Posterior cingulate gyrus (tissue), 11 donors: ENCODE measurements at regions of chr17 and their contacts with region 1.

Region 1: GRCh38 chr17:68533887-68534694 is 21.9 kb downstream of the PRKAR1A start:
- DNase-seq: no peak

Region 2: DNA sequence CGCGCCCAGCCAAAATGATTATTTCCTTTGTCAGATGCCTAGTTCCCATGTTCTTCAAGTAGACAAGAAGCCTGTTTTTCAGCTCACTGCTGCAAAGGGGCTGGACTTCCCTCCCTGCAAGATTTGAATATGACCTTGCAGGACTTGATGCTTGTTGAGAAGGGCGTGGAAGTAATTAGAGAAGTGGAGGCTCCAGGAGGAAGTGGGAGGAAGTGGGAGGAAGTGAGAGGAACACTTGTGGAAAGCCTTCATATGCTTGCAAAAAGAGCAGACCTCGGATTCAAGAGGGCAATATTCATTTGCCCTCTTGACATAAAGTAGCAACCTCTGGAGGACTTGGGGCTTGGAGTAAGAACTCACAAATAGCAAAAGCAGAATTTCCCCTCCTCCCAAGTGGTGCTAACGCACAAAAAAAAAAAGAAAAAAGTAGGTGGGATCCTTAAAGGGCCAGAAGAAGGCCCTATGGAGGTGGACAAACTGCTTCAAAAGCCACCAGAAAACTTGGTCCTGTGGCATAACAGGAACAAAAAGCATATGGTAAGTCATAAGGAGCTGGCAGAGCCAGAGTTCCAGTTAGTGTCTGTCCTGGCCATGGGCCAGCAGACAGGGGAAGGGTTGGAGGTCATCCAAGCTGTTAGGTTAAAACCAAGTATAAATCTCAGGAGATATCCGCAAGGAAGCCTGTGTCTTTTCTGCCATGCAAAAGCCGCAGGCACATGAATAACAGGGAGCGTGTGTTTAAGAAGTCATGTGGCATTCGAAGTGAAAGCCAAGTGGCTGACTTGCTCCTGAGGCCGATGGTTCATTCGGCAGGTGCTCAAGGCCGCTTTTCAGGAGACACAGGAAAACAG is 42.5 kb before region 1 on chr17:
- intact Hi-C with region 1: no loop called
- DNase-seq: no peak

Region 3: DNA sequence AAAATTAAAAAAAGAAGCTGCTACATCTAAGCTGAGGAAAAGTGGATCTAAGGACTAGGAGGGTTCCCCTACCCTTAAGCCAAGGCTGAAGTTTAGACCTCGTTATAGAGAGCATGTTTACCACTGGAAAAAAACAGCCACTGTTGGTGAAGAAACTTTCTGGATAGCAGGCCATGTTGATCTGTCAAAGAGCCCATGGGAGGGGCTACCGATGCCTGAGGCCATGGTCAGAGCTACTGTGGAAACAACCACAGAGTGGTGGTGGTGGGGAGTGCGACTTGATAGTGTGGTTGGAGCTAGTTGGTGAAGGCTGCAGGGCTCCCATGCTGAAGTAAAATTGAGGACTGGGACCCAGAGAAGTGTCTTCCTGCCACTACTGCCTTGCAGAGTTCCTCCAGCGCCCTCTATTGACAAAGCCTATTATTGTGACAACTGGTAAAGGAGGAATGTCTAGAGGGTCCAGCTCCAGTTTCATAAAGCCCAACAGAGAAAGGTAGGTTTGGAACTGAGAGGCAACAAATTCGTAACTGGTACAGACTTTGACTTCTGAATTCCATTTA is 79.7 kb after region 1 on chr17:
- intact Hi-C with region 1: loop called (anchors 5 kb)
- DNase-seq: peak in 1 of 10 donors; percentile 14